ENCODE measurements at regions of chr7 and their contacts with region 1.

Region 1: GRCh38 chr7:14457568-14458453 is 444.7 kb downstream of the DGKB start:
- DNase-seq: peak; percentile 60
- ATAC-seq: peak; percentile 74

Region 2: GRCh38 chr7:13279854-13280435 is 1177.9 kb before region 1 on chr7:
- intact Hi-C with region 1: loop called (anchors 5 kb)
- DNase-seq: no peak
- ATAC-seq: no peak

Region 3: GRCh38 chr7:13524076-13524475 is 933.7 kb before region 1 on chr7:
- intact Hi-C with region 1: loop called (anchors 10 kb)
- DNase-seq: no peak
- ATAC-seq: no peak

Region 4: DNA sequence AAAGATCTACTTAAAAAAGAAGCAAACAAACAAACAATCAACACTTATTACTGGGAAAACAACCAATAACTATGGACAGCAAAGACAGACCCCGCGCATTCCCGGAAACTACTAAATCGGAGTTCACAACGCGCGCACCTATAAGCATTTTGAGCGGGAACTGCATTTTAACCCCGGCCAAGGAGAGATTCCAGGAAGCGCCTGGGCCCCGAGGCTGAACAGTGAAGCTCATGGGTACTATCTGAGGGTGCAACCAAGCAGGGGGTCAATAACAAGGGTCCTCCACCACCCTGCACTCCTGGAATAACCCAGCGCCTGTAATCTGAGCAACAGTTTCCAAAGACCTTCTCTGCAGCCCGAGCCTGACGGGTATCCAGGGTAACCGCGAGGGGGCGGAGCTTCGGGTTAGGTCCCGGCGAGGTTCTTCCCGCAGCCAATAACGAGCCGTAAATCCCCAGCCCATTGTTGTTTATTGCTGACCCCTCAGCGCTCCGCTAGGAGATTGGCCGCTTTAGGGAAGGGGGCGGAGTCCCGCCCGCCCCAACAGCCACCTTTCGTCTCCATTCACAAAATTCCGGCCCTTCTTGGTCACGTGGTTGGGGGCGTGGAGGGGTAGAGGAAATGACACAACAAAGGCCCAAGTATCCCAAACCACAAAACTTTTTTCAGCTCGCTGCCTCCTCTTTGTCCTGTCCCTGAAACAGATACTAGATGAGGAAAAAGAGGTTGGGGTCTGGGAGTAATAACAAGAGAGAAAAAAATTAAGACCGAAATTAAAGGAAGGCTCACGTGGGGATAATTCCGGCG is 466.6 kb before region 1 on chr7:
- intact Hi-C with region 1: loop called (anchors 5 kb)
- DNase-seq: peak; percentile 97
- ATAC-seq: peak; percentile 98

Region 5: GRCh38 chr7:14137676-14138075 is 320.1 kb before region 1 on chr7:
- intact Hi-C with region 1: no loop called
- DNase-seq: no peak
- ATAC-seq: no peak

Region 6: GRCh38 chr7:14398526-14398925 is 59.3 kb before region 1 on chr7:
- intact Hi-C with region 1: loop called (anchors 5 kb)
- DNase-seq: no peak
- ATAC-seq: no peak

Region 7: DNA sequence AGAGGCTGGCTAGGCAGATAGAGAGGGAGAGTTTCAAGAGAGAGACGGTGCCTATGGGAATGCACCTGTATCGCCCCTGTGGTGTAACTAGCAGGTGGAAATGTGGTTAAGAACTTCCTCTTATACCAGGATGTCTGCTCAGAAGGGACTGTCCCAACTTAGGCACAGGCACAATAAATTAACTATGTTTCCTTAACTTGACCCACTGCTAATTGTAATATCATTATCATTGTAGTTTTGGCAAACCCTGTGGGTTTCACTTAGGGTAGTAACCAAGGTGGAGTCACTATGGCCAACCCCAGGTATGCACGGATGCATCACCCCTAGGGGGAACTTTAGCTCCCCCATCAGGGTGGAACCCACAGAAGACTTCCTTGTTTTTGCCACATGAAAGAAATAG is 11.0 kb before region 1 on chr7:
- intact Hi-C with region 1: no loop called
- DNase-seq: no peak
- ATAC-seq: no peak